ENCODE measurements at regions of chr5 and their contacts with region 1.

Region 1: GRCh38 chr5:173890195-173890991 is 2.2 kb downstream of the CPEB4 start:
- DNase-seq: no peak
- H3K4me3 ChIP-seq: peak overlapping the region; percentile 79
- H3K27me3 ChIP-seq: no peaks in the 10 kb centered on the region
- CTCF ChIP-seq: no peak

Region 2: DNA sequence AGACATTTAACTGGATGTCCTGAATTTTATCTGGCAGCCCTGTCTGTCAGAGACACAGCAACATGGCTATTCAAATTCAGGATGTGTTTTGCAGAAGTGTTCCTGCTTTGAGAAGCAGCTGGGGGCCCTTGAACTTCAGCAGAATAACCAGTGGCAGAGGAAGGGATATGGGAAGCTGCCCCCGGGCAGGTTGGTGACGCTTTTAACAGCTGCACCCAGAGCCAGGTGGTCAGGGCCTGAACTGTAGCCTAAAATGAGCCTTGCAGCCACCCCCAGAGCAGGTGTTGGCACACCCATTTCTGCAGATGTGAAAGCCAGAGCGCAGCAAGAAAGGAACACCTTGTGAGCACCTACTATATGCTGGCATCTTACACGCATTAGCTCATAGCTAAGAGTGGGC is 145.3 kb before region 1 on chr5:
- CTCF ChIA-PET with region 1: no interaction called
- POLR2A ChIA-PET with region 1: no interaction called
- DNase-seq: no peak
- H3K4me3 ChIP-seq: no peak overlapping the region
- H3K27me3 ChIP-seq: no peaks in the 10 kb centered on the region; the same call in 1 of the 2 replicates
- CTCF ChIP-seq: no peak

Region 3: DNA sequence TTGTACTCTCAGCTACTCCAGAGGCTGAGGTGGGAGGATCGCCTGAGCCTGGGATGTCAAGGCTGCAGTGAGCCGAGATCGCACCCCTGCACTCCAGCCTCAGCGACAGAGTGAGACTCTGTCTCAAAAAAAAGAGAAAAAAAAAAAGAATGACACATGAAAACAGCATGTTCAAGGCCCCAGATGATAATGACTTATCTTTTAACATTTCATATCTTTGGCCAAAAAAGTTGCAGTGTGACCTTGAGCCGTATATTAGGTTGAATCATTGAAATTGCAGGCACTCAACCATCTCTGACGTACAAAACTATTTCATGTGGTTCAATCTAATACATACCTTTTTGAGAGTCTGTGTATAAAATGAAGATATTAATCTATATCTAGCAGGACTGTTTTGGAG is 81.4 kb before region 1 on chr5:
- CTCF ChIA-PET with region 1: no interaction called
- POLR2A ChIA-PET with region 1: interaction called, 10 read pairs
- DNase-seq: no peak
- H3K4me3 ChIP-seq: no peak overlapping the region
- H3K27me3 ChIP-seq: no peaks in the 10 kb centered on the region; the same call in 1 of the 2 replicates
- CTCF ChIP-seq: no peak